Common myeloid progenitor, CD34-positive (primary cell): ENCODE measurements at regions of chr5 and their contacts with region 1.

Region 1: DNA sequence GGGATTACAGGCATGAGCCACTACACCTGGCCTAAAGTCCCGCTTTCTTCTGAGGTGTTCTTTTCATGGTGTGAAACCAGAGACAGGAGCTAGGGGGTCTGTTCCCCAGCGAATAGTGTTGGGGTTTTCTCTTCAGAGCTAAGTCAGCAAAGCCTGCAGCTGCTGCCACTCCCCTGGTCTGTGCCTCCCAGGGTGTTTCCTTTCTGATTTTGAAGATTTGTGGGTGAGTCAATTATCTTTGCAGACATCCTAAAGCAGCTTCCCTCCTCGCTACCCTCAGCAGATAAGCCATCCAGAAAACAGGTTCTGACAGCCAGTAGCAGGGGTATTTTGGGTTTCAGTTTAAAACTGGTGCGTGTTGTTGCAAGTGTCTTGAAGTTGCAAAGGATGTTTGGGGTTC is 72.0 kb upstream of the IQGAP2 start:
- DNase-seq: peak; percentile 80 to 97 (median 95)
- H3K4me3 ChIP-seq: peak overlapping the region in 3 of 7 experiments; percentile 1 to 54 (median 40)
- H3K27ac ChIP-seq: peak overlapping the region; percentile 36 to 46
- H3K4me1 ChIP-seq: peaks cover 35 to 80% (median 73%) of the 10 kb centered on the region in 4 experiments
- H3K27me3 ChIP-seq: no peaks in the 10 kb centered on the region

Region 2: GRCh38 chr5:76319673-76320072 is 11.5 kb before region 1 on chr5:
- CTCF ChIA-PET with region 1: interaction called, 21 read pairs
- POLR2A ChIA-PET with region 1: interaction called, 9 read pairs
- DNase-seq: peak; percentile 73 to 92 (median 84)
- H3K4me3 ChIP-seq: peak overlapping the region in 5 of 7 experiments; percentile 15 to 56 (median 28)
- H3K27ac ChIP-seq: peak overlapping the region; percentile 46 to 73
- H3K4me1 ChIP-seq: peaks cover 17 to 32% (median 31%) of the 10 kb centered on the region in 4 experiments
- H3K27me3 ChIP-seq: no peaks in the 10 kb centered on the region

Region 3: DNA sequence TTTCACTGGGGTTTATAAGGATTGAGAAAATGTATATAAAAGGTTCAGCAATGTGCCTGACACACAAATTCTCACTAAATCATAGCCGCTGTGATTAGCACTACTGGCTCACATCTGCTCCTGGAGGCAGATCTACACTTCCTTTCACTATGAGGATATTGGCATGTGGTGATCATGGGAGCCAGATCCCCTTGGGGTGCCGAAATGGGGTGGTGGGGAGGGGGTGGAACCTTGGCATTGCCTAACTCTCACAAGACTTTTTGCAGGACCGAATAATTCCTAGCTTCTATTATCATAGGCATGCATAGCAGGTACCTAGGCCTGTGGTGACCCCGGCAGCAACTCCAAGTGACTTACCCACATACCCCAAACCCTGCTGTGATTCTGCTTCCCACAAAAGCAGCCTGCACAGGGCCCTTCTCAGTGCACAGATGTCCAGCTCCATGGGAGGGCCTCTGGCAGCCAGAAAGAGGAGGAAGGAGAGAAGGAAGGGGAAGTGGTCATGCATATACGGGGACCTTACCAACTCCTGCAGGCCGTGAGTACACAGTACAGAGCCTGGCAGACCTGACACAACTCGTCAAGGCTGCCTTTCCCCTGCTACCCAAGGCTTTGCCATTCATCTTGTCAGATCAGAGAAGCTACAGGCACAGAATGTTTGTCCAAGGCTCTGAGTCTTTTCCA is 10.7 kb after region 1 on chr5:
- CTCF ChIA-PET with region 1: interaction called, 37 read pairs
- POLR2A ChIA-PET with region 1: no interaction called
- DNase-seq: peak in 2 of 3 donors; percentile 59 to 75
- H3K4me3 ChIP-seq: peak overlapping the region in 1 of 7 experiments; percentile 38
- H3K27ac ChIP-seq: no peak overlapping the region
- H3K4me1 ChIP-seq: peaks cover 10 to 31% (median 26%) of the 10 kb centered on the region in 4 experiments
- H3K27me3 ChIP-seq: no peaks in the 10 kb centered on the region

Region 4: GRCh38 chr5:76351577-76351976 is 20.5 kb after region 1 on chr5:
- CTCF ChIA-PET with region 1: interaction called, 13 read pairs
- POLR2A ChIA-PET with region 1: no interaction called
- DNase-seq: no peak
- H3K4me3 ChIP-seq: no peak overlapping the region
- H3K27ac ChIP-seq: no peak overlapping the region
- H3K4me1 ChIP-seq: peaks cover 0 to 14% (median 7%) of the 10 kb centered on the region in 4 experiments
- H3K27me3 ChIP-seq: no peaks in the 10 kb centered on the region

Region 5: GRCh38 chr5:76544268-76544926 is 213.3 kb after region 1 on chr5:
- CTCF ChIA-PET with region 1: interaction called, 12 read pairs
- POLR2A ChIA-PET with region 1: interaction called, 3 read pairs
- DNase-seq: peak; percentile 83 to 88 (median 88)
- H3K4me3 ChIP-seq: peak overlapping the region in 5 of 7 experiments; percentile 11 to 62 (median 51)
- H3K27ac ChIP-seq: peak overlapping the region; percentile 90 to 93
- H3K4me1 ChIP-seq: peaks cover 53 to 100% (median 89%) of the 10 kb centered on the region in 4 experiments
- H3K27me3 ChIP-seq: no peaks in the 10 kb centered on the region